ENCODE measurements at regions of chr10 and their contacts with region 1.

Region 1: GRCh38 chr10:3882855-3883254 is 97.8 kb upstream of the KLF6 start:
- DNase-seq: no peak
- H3K4me3 ChIP-seq: no peak overlapping the region
- H3K27ac ChIP-seq: no peak overlapping the region
- H3K4me1 ChIP-seq: no peaks in the 10 kb centered on the region
- H3K27me3 ChIP-seq: no peaks in the 10 kb centered on the region
- CTCF ChIP-seq: no peak
- POLR2A ChIP-seq: no peak

Region 2: DNA sequence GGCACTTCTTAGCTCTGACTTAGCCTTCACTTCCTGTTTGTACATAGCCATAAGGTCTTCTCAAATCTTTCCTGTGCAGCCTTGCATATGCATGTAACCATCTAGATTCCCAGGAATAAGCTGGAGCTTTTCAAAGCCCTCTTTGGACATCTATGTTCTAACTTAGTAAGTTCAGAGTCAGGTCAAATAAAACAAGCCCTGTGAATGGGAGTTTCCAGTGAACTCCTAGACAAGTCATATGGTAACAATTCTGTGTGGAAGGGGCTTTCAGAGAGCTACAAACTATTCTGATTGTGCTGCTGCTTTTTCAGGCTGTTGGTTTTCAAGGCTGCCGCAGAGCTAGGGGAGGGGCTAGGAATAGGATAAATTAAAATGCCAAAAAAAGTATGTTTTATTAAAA is 734.7 kb after region 1 on chr10:
- intact Hi-C with region 1: loop called (anchors 5 kb)
- DNase-seq: no peak
- H3K4me3 ChIP-seq: no peak overlapping the region
- H3K27ac ChIP-seq: no peak overlapping the region
- H3K4me1 ChIP-seq: no peaks in the 10 kb centered on the region
- H3K27me3 ChIP-seq: no peaks in the 10 kb centered on the region
- CTCF ChIP-seq: no peak
- POLR2A ChIP-seq: no peak